Aorta (tissue), 5 donors: ENCODE measurements at regions of chr2 and their contacts with region 1.

Region 1: DNA sequence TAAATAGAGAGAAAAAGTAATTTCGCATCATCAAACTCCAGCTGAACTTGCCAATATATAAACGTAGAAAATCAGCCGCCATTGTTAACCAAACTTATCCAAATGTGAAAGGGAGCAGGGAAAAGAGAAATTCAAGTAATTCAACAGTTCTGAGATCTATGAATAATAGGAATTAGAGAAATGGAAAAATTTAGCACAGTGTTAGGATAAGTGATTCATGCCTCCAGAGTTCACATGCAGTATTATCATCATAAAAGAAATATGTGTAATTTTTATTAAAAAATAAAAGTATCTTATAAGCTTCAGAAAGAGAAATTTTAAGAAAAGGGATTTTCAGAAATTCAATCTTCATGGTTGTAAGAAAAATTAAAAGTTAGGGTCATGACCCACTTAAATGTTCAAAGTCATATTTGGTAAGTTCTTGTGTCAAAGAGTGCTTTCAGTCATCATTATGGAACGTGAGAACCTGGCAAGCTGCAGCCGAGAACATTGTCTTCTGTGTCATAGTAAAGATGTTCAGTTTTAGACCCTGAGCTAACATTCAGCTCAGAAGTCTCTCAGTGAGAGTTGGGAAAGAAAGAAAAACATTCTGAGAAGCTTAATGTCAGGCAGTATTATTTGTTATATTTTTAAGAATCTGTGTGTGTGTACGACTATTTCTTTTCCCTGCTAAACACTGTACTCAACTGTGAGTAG is 414.3 kb upstream of the RGPD4 start:
- DNase-seq: no peak
- ATAC-seq: peak; percentile 36
- H3K4me3 ChIP-seq: peak overlapping the region in 1 of 2 donors; percentile 48
- H3K27ac ChIP-seq: peak overlapping the region in 1 of 2 donors; percentile 95
- H3K4me1 ChIP-seq: peaks cover 5 to 6% of the 10 kb centered on the region in 2 donors
- H3K27me3 ChIP-seq: no peaks in the 10 kb centered on the region

Region 2: GRCh38 chr2:106839849-106840581 is 572.3 kb before region 1 on chr2:
- intact Hi-C with region 1: loop called in 1 of 2 experiments (anchors 10 kb)
- DNase-seq: no peak
- ATAC-seq: no peak
- H3K4me3 ChIP-seq: no peak overlapping the region
- H3K27ac ChIP-seq: peak overlapping the region; percentile 30 to 70
- H3K4me1 ChIP-seq: peaks cover 5 to 13% of the 10 kb centered on the region in 2 donors
- H3K27me3 ChIP-seq: no peaks in the 10 kb centered on the region

Region 3: DNA sequence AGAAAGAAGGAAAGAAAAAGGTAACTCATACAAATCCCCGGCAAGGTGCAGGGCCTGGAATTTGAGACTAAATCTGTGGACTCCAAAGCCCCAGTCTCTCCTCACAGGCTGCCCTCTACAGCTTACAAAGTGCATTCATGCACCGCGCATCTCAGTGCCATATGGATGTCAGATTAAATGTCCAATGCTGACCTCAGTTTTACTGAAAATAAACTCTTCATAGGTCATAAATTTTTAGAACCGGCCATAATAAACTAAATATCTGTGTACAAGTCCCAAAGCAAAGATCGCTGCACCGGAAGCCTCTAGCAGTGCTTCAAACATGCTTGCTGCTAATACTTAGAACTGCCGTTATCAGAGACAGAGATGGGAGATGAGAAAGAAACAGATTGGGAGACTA is 544.1 kb before region 1 on chr2:
- intact Hi-C with region 1: loop called in 1 of 2 experiments (anchors 10 kb)
- DNase-seq: no peak
- ATAC-seq: peak; percentile 57
- H3K4me3 ChIP-seq: peak overlapping the region in 1 of 2 donors; percentile 26
- H3K27ac ChIP-seq: peak overlapping the region; percentile 66 to 97
- H3K4me1 ChIP-seq: peaks cover 3 to 11% of the 10 kb centered on the region in 2 donors
- H3K27me3 ChIP-seq: no peaks in the 10 kb centered on the region

Region 4: DNA sequence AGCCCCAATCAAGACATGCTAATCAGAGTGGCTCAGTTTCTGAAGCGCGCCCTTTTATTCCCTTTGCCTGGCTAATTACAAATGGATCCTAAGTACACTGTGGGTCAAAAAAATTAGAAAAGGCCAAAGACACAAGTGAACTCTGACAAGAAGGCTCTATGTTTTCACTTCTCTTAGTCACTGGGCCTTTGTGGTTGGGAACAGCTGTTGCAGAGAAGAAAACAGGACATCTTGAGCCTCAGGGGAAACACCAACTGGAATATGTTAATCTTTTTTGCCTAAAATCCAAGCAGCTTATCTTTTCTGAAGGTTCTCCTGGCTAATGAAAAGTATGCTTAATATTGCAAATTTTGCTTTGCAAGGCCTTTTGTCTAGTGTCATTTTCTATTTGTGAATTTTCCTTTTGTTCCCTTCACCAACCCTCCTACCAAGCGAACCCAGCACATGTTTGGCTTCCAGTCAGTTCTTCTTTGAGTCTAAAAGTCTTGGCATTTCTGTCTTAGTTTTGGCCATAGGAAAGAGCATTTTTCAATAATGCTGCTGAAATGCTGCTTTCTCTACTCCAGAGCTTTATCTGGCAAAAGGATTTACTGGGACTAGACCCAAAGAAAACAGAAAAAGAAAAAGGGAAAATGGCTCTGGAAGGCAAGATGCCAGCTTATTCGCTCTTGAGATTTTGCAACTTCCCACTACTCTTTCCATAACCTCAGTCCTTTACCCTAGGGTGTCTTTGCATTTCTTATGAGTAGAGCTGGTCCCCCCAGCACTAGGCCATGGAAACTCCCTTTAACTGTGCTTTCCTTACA is 86.2 kb before region 1 on chr2:
- intact Hi-C with region 1: loop called in 1 of 2 experiments (anchors 5 kb)
- DNase-seq: no peak
- ATAC-seq: peak; percentile 86
- H3K4me3 ChIP-seq: no peak overlapping the region
- H3K27ac ChIP-seq: peak overlapping the region; percentile 84 to 88
- H3K4me1 ChIP-seq: peaks cover 2 to 3% of the 10 kb centered on the region in 2 donors
- H3K27me3 ChIP-seq: no peaks in the 10 kb centered on the region

Region 5: GRCh38 chr2:107337209-107337898 is 75.0 kb before region 1 on chr2:
- intact Hi-C with region 1: loop called in 1 of 2 experiments (anchors 5 kb)
- DNase-seq: no peak
- ATAC-seq: peak; percentile 84
- H3K4me3 ChIP-seq: no peak overlapping the region
- H3K27ac ChIP-seq: peak overlapping the region in 1 of 2 donors; percentile 84
- H3K4me1 ChIP-seq: peaks cover 3% of the 10 kb centered on the region in 2 donors
- H3K27me3 ChIP-seq: no peaks in the 10 kb centered on the region